B cell (primary cell): ENCODE measurements at regions of chr14 and their contacts with region 1.

Region 1: GRCh38 chr14:105203057-105203531 is 22.0 kb upstream of the NUDT14 start:
- DNase-seq: peak; percentile 77
- ATAC-seq: peak; percentile 45
- H3K4me3 ChIP-seq: no peak overlapping the region
- H3K4me3 Mint-ChIP-seq: no peak overlapping the region
- H3K27ac ChIP-seq: no peak overlapping the region
- H3K27ac Mint-ChIP-seq: no peak overlapping the region
- H3K4me1 ChIP-seq: peaks cover 18 to 29% of the 10 kb centered on the region in 2 donors
- H3K4me1 Mint-ChIP-seq: peaks cover 17% of the 10 kb centered on the region
- H3K27me3 ChIP-seq: peaks cover 0 to 53% (median 14%) of the 10 kb centered on the region in 4 experiments
- H3K27me3 Mint-ChIP-seq: peaks cover 18% of the 10 kb centered on the region
- CTCF ChIP-seq: peak; percentile 95

Region 2: DNA sequence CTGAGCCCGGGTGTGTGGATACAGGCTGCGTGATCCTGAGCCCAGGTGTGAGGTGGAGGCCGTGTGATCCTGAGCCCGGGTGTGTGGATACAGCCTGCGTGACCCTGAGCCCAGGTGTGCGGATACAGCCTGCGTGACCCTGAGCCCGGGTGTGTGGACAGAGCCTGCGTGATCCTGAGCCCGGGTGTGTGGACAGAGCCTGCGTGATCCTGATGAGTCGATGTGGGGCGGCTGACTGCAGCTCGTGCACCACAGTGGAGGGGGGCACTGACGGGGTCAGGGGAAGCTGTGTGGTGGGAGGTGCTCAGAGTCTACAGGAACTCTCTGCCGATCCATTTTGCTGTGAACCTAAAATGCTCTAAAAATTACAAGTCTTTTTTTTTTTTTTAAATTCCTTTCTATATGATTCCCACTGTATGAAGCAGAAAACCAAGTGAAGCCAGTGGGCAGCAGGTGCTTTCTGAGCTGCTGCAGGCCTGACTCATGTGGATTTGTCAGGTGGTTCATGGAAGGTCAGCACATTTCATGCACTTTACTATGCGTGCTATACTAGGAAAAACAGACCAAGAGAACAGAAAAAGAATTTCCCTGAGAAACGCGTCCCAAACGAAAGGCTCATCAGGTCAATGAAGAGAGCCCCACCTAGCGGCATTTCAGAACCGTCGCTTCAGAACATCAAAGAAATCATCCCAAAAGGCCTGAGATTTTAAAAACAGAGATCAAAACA is 78.4 kb after region 1 on chr14:
- CTCF ChIA-PET with region 1: interaction called, 3 read pairs
- POLR2A ChIA-PET with region 1: no interaction called
- intact Hi-C with region 1: loop called (anchors 1 kb)
- DNase-seq: peak; percentile 50
- ATAC-seq: no peak
- H3K4me3 ChIP-seq: no peak overlapping the region
- H3K4me3 Mint-ChIP-seq: no peak overlapping the region
- H3K27ac ChIP-seq: no peak overlapping the region
- H3K27ac Mint-ChIP-seq: no peak overlapping the region
- H3K4me1 ChIP-seq: peaks cover 9 to 15% of the 10 kb centered on the region in 2 donors
- H3K4me1 Mint-ChIP-seq: peaks cover 17% of the 10 kb centered on the region
- H3K27me3 ChIP-seq: no peaks in the 10 kb centered on the region
- H3K27me3 Mint-ChIP-seq: no peaks in the 10 kb centered on the region
- CTCF ChIP-seq: peak; percentile 32

Region 3: DNA sequence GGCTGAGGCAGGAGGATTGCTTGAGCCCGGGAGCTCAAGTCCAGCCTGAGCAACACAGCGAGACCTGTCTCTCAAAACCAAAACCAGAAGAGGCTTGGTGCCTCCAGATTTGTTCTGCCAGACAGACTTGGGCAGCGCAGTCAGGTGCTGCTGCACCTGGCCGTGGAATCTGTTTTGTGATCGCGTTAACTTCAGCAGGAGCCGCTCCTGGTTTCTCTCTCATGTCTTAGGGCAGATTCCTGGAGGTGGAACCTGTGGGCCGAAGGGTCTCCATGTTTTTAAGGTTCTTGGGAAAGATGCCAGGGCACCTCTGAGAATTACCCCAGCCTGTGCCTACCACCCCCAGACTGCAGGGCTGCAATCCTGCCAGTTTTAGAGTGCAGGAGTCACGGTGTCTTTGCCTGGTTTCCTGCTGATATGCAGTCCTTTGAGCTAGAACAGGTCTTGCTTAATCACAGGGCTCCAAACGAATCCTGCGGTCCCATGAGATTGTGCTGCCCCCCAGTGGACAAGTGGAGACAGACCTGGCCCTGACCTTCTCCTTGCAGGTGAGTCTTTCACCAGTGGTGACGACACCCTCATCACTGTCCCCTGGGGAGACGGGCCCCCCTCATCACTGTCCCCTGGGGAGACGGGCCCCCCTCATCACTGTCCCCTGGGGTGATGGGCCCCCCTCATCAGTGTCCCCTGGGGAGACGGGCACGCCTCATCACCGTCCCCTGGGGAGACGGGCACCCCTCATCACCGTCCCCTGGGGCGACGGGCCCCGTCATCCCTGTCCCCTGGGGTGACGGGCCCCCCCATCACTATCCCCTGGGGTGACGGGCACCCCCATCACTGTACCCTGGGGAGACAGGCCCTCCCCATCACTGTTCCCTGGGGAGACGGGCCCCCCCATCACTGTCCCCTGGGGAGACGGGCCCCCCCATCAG is 149.1 kb after region 1 on chr14:
- CTCF ChIA-PET with region 1: interaction called, 7 read pairs
- POLR2A ChIA-PET with region 1: no interaction called
- intact Hi-C with region 1: loop called (anchors 1 kb)
- DNase-seq: peak; percentile 94
- ATAC-seq: peak; percentile 89
- H3K4me3 ChIP-seq: no peak overlapping the region
- H3K4me3 Mint-ChIP-seq: no peak overlapping the region
- H3K27ac ChIP-seq: peak overlapping the region; percentile 44 to 81
- H3K27ac Mint-ChIP-seq: peak overlapping the region; percentile 68
- H3K4me1 ChIP-seq: peaks cover 4 to 13% of the 10 kb centered on the region in 2 donors
- H3K4me1 Mint-ChIP-seq: peaks cover 8% of the 10 kb centered on the region
- H3K27me3 ChIP-seq: no peaks in the 10 kb centered on the region
- H3K27me3 Mint-ChIP-seq: no peaks in the 10 kb centered on the region
- CTCF ChIP-seq: peak; percentile 77